ENCODE measurements at regions of chr19 and their contacts with region 1.

Region 1: DNA sequence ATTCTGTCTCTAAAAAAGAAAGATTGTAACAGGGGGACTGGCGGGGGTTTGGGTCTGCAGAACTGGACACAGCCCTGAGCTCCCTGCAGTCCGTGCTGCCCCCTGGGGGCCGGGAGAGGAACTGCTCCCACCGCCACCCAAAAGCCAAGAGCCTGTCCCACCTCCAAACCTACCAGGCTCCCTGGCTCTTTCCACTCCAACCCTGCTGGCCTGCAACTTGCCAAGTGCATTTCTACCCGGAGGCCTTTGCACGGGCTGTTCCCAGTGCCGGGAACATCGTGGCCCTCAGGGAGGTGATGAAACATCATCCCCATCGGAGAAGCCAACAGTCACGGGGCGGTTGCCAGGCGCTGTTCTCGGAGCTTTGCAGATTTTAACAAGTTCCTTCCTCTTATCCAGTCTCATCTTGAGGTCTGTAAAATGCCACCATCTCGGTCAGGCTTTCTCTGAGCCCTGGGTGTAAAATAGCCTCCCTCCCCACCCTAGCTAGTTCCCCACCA is 50.7 kb downstream of the SMIM24 start:
- DNase-seq: peak; percentile 95 to 97 (median 97)
- ATAC-seq: peak; percentile 84 to 86
- H3K4me3 ChIP-seq: no peak overlapping the region
- H3K27ac ChIP-seq: peak overlapping the region; percentile 76
- H3K4me1 ChIP-seq: no peaks in the 10 kb centered on the region
- H3K27me3 ChIP-seq: no peaks in the 10 kb centered on the region

Region 2: GRCh38 chr19:3146677-3147100 is 282.9 kb before region 1 on chr19:
- intact Hi-C with region 1: no loop called
- DNase-seq: peak in 2 of 3 donors; percentile 65 to 74
- ATAC-seq: peak in 1 of 2 donors; percentile 10
- H3K4me3 ChIP-seq: no peak overlapping the region
- H3K27ac ChIP-seq: no peak overlapping the region
- H3K4me1 ChIP-seq: no peaks in the 10 kb centered on the region
- H3K27me3 ChIP-seq: no peaks in the 10 kb centered on the region

Region 3: GRCh38 chr19:3365836-3366752 is 63.5 kb before region 1 on chr19 and contains the start of gene NFIC:
- intact Hi-C with region 1: loop called in 1 of 4 experiments (anchors 10 kb)
- DNase-seq: peak; percentile 86 to 94 (median 92)
- ATAC-seq: peak; percentile 72 to 76
- H3K4me3 ChIP-seq: peak within 1 kb of the TSS; percentile 95
- H3K27ac ChIP-seq: peak within 1 kb of the TSS; percentile 98
- H3K4me1 ChIP-seq: peaks cover 10% of the 10 kb centered on the region
- H3K27me3 ChIP-seq: no peaks in the 10 kb centered on the region
- total RNA-seq, gene NFIC: 175 to 223 (median 188) TPM

Region 4: DNA sequence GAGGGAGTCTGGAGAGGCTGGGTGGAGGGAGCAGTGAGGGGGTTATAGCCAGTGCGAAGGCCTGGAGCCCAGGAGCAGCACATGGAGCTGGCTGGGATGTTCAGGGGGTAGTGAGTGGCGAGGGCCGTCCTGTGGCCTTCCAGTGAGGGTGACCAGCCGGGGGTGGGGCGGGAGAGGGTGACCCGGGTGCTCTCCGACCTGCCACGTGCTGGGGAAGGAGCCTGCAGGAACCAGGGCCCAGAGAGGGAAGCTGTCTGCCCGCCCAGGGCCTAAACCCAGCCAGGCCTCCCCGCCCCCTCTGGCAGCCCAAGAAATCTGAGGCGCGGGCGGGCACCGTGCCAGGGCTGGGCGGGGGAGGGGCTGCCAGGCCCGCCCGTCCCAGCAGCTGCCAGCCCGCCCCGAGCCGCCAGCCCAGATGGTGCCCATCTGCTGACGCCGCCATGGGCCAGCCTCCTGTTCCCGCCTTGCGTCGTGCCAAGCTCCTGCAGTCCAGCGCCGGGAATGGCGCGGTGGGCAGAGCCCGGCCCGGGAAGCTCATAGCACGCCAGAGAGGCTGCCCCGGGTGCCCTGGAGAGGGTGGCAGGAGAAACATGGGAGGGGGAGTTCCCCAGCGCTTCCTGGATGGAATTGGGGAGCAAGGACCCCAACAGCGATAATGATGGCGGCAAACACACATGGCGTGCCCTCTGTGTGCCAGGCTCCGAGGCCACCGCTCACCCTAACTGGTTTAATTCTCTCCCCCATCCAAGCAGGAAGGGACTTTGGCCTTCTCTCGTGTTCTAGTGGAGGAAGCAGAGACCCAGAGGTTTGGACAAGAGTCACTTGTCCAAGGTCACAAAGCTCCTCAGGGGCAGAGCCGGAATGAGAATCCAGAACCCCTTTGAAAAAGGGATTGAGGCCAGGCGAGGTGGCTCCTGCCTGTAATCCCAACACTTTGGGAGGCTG is 41.7 kb before region 1 on chr19:
- intact Hi-C with region 1: no loop called
- DNase-seq: peak; percentile 89 to 96 (median 95)
- ATAC-seq: peak; percentile 83 to 86
- H3K4me3 ChIP-seq: no peak overlapping the region
- H3K27ac ChIP-seq: peak overlapping the region; percentile 83
- H3K4me1 ChIP-seq: peaks cover 18% of the 10 kb centered on the region
- H3K27me3 ChIP-seq: no peaks in the 10 kb centered on the region

Region 5: GRCh38 chr19:3479177-3479833 is 49.7 kb after region 1 on chr19:
- intact Hi-C with region 1: no loop called
- DNase-seq: peak in 1 of 3 donors; percentile 46
- ATAC-seq: no peak
- H3K4me3 ChIP-seq: no peak overlapping the region
- H3K27ac ChIP-seq: no peak overlapping the region
- H3K4me1 ChIP-seq: no peaks in the 10 kb centered on the region
- H3K27me3 ChIP-seq: no peaks in the 10 kb centered on the region